ENCODE measurements at regions of chr5 and their contacts with region 1.

Region 1: DNA sequence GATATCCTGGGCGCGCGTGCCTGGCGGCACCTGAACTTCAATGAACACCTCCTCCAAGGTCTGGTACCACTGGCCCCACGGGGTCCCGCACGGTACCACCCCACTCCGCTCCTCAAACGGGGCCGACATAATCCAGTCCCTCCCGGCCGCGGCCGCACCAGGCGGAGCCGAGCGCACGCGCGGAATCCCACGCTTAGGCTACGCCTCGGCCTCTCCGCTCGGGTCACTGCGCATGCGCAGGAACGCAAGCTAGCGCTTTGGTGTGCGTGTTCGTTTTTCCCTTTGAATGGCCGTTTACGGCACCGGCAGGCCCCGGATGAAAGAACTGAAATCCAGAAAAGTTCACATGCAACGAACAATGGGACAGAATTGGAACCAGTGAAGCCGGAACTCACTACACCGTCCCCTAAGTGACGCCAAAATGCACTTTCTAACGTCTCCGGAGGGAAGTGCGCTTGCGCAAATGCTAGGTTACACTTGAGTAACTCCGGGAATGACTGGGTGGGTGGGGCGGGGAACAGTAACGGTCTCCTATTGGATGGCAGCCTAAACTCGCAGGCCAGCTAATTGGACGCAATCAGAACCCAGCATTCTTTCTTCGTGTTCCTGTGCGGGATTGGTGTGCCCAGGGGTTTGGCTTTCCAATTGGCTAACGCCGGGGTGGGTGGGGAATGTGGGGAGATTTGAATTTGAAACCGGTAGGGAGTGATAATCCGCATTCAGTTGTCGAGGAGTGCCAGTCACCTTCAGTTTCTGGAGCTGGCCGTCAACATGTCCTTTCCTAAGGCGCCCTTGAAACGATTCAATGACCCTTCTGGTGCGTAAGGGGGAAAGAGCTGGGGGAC is at the starts of genes HMMR and NUDCD2:
- DNase-seq: peak; percentile 98
- H3K4me3 ChIP-seq: peak within 1 kb of the TSS; percentile 82
- H3K27ac ChIP-seq: peak within 1 kb of the TSS; percentile 98
- H3K27me3 ChIP-seq: no peaks in the 10 kb centered on the region
- CTCF ChIP-seq: no peak; the same call in 1 of the 2 replicates
- polyA plus RNA-seq, gene HMMR: 6.3 and 12.5 TPM in 2 replicates
- polyA plus RNA-seq, gene NUDCD2: 3.8 and 5.6 TPM in 2 replicates

Region 2: DNA sequence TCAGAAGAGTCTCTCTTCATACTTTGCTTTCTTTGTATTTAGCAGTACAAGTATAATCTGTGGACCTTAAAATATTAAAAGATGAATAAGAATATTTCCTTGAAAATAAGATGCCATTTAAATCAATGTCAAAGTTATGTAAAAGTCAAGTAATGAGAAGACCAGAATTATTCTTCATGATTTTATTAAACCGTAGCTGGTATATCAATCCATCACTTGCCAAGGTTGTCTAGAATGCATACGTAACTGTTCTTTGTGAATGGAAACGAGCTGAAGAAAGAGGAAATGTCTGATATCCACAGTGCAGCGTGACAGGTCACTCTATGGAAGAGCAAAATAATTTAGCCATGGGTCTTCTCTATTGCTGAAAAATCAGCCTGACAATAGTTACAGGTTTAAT is 511.5 kb before region 1 on chr5:
- CTCF ChIA-PET with region 1: no interaction called
- POLR2A ChIA-PET with region 1: no interaction called
- DNase-seq: no peak
- H3K4me3 ChIP-seq: no peak overlapping the region
- H3K27ac ChIP-seq: no peak overlapping the region
- H3K27me3 ChIP-seq: no peaks in the 10 kb centered on the region
- CTCF ChIP-seq: no peak

Region 3: GRCh38 chr5:163437309-163438182 is 22.6 kb before region 1 on chr5 and contains the start of gene CCNG1:
- CTCF ChIA-PET with region 1: interaction called, 4 read pairs
- POLR2A ChIA-PET with region 1: interaction called, 20 read pairs
- DNase-seq: peak; percentile 90
- H3K4me3 ChIP-seq: peak within 1 kb of the TSS; percentile 95
- H3K27ac ChIP-seq: peak within 1 kb of the TSS; percentile 81
- H3K27me3 ChIP-seq: no peaks in the 10 kb centered on the region
- CTCF ChIP-seq: no peak
- polyA plus RNA-seq, gene CCNG1: 236 and 325 TPM in 2 replicates

Region 4: DNA sequence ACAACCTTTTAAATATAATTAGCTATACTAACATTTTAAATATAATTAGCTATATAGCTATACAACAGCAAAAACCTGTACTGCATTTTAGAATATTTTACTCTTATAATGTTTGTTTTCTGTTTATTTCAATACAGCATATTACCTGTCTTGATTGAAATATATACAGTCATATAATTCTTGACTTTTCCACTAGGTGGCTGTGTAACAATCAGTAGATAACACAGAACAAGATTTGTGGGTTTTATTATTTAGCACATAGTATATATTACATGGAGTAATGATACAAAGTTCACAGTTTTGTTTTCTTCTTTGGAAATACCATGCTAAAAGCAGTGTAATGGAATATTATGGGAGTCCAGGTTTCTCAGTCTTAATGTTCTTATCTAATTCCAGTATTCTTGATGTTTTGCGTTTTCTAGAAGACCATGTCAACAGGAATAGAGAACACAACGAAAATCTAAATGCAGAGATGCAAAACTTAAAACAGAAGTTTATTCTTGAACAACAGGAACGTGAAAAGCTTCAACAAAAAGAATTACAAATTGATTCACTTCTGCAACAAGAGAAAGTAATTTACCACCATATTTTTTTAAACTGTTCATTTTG is 13.6 kb after region 1 on chr5:
- CTCF ChIA-PET with region 1: interaction called, 16 read pairs
- POLR2A ChIA-PET with region 1: interaction called, 4 read pairs
- DNase-seq: no peak
- H3K4me3 ChIP-seq: no peak overlapping the region
- H3K27ac ChIP-seq: no peak overlapping the region
- H3K27me3 ChIP-seq: no peaks in the 10 kb centered on the region
- CTCF ChIP-seq: peak; percentile 43

Region 5: GRCh38 chr5:163505368-163506094 is 45.4 kb after region 1 on chr5 and contains the start of gene MAT2B:
- CTCF ChIA-PET with region 1: interaction called, 7 read pairs
- POLR2A ChIA-PET with region 1: interaction called, 13 read pairs
- DNase-seq: peak; percentile 78
- H3K4me3 ChIP-seq: peak within 1 kb of the TSS; percentile 88
- H3K27ac ChIP-seq: peak within 1 kb of the TSS; percentile 96
- H3K27me3 ChIP-seq: no peaks in the 10 kb centered on the region
- CTCF ChIP-seq: peak; percentile 41; the same call in 1 of the 2 replicates
- polyA plus RNA-seq, gene MAT2B: 59.5 and 86.4 TPM in 2 replicates

Measured in AG04450 (cell line).